ENCODE measurements at regions of chr6 and their contacts with region 1.

Region 1: GRCh38 chr6:132598473-132598872 is 8.9 kb upstream of the TAAR5 start:
- DNase-seq: peak in 1 of 2 experiments; percentile 51
- H3K4me3 ChIP-seq: no peak overlapping the region
- H3K27ac ChIP-seq: no peak overlapping the region
- H3K4me1 ChIP-seq: no peaks in the 10 kb centered on the region
- H3K27me3 ChIP-seq: no peaks in the 10 kb centered on the region
- CTCF ChIP-seq: peak; percentile 52; the same call in 1 of the 2 replicates

Region 2: GRCh38 chr6:132344811-132345210 is 253.7 kb before region 1 on chr6:
- CTCF ChIA-PET with region 1: no interaction called
- POLR2A ChIA-PET with region 1: no interaction called
- intact Hi-C with region 1: no loop called
- DNase-seq: no peak
- H3K4me3 ChIP-seq: no peak overlapping the region
- H3K27ac ChIP-seq: no peak overlapping the region
- H3K4me1 ChIP-seq: no peaks in the 10 kb centered on the region
- H3K27me3 ChIP-seq: no peaks in the 10 kb centered on the region
- CTCF ChIP-seq: no peak

Region 3: DNA sequence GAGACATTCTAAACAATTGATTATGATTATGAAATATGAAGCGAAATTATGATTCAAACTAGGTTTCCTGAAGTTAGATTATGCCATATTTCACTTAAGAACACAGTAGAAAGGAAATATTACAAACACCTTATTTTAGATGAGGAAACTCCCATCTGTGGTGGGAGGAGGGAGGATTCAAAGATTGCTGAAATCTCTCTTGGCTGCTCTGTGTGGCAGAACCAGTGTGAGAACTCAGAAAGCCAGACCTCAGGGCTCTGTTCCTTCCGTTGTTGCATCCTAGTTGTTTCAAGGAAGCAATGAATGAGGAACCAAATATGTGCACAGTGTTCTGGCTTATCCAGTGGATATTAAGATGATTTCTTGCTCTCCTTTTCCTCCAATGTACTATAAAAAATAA is 11.0 kb before region 1 on chr6:
- CTCF ChIA-PET with region 1: no interaction called
- POLR2A ChIA-PET with region 1: interaction called, 10 read pairs
- intact Hi-C with region 1: no loop called
- DNase-seq: no peak
- H3K4me3 ChIP-seq: no peak overlapping the region
- H3K27ac ChIP-seq: no peak overlapping the region
- H3K4me1 ChIP-seq: no peaks in the 10 kb centered on the region
- H3K27me3 ChIP-seq: no peaks in the 10 kb centered on the region
- CTCF ChIP-seq: no peak

Measured in PC-9 (cell line).